Calu3 (cell line): ENCODE measurements at regions of chr17 and their contacts with region 1.

Region 1: DNA sequence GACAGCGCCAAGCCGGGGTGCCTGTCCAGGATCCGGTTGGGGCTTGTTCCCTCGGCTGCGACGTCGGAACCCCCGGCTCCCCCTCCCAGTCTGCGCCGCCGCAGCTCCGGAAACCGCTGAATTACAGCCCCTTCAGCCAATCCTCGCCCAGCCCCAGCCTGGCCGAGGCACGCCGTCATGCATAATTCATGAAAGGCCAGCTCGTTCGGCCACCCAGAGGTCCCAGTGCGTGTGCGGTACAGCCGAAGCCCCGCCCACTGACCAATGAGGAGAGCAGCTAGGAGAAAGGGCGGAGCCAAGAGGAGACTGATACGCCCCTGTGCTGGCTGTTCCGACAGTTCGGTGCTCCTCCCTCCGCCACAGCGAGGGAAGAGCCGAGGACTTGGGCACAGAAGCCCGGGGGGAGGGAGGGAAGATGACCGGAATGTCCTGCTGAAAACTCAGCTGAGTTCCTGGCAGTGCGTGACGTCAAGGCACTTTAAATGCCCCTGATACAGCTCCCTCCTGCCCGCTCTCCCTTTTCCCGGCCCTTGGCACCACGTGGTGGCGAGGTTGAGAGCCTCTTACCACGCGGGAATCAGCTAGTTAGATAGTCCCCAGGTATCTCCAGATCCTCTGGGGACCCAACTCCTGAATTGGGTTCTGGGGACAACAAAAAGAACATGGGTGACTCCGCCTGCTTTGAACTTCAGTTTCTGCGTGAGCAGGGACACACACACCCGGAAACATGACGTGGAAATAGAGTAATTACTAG is at the start of gene STAT3:
- DNase-seq: peak; percentile 100
- H3K4me3 Mint-ChIP-seq: peak within 1 kb of the TSS; percentile 98
- H3K27ac Mint-ChIP-seq: peak within 1 kb of the TSS; percentile 95
- H3K4me1 Mint-ChIP-seq: peaks cover 42% of the 10 kb centered on the region
- H3K27me3 Mint-ChIP-seq: no peaks in the 10 kb centered on the region
- CTCF ChIP-seq: no peak
- total RNA-seq, gene STAT3: 183 and 196 TPM in 2 replicates

Region 2: DNA sequence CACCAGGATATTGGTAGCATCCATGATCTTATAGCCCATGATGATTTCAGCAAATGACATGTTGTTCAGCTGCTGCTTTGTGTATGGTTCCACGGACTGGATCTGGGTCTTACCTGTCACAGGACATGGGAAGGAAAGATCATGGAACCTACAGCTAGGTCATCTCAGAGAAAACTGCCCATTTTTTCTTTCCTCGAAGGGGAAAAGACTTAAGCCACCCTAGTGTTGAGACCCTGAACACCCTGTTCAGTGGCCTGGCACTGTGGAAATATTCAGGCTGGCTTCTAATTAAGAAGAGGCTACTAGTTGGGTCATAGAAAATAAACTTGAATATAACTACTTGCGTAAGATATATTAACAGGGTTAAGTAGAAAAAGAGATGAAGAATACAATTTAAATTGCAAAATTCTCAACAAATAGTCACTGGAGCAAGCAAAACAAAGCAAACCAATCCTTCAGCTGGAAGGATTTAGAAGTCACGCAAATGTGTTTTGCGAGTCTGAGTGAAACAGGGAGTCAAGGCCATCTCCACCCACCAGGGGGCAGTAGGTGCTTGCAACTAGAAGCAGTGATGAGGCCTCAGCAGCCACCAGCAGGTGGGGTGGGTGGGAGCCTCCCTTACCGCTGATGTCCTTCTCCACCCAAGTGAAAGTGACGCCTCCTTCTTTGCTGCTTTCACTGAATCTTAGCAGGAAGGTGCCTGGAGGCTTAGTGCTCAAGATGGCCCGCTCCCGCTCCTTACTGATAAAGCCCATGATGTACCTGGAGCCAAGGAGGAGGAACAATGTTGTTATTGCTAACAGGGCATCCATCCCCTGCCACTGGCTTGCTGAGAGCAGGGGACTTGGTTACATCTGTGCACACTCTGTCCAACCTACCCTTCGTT is 65.9 kb before region 1 on chr17:
- CTCF ChIA-PET with region 1: interaction called, 6 read pairs
- intact Hi-C with region 1: loop called (anchors 5 kb)
- DNase-seq: peak; percentile 98
- H3K4me3 Mint-ChIP-seq: no peak overlapping the region
- H3K27ac Mint-ChIP-seq: no peak overlapping the region
- H3K4me1 Mint-ChIP-seq: peaks cover 12% of the 10 kb centered on the region
- H3K27me3 Mint-ChIP-seq: no peaks in the 10 kb centered on the region
- CTCF ChIP-seq: peak; percentile 100